ENCODE measurements at regions of chr15 and their contacts with region 1.

Region 1: GRCh38 chr15:83582381-83582780 is 71.5 kb upstream of the ADAMTSL3 start:
- DNase-seq: no peak
- ATAC-seq: no peak
- H3K4me3 ChIP-seq: no peak overlapping the region
- H3K27ac ChIP-seq: no peak overlapping the region
- H3K4me1 ChIP-seq: no peaks in the 10 kb centered on the region
- H3K27me3 ChIP-seq: no peaks in the 10 kb centered on the region
- CTCF ChIP-seq: no peak

Region 2: GRCh38 chr15:83644439-83644838 is 62.1 kb after region 1 on chr15:
- intact Hi-C with region 1: loop called in 1 of 10 experiments (anchors 5 kb)
- DNase-seq: no peak
- ATAC-seq: no peak
- H3K4me3 ChIP-seq: no peak overlapping the region
- H3K27ac ChIP-seq: no peak overlapping the region
- H3K4me1 ChIP-seq: no peaks in the 10 kb centered on the region
- H3K27me3 ChIP-seq: no peaks in the 10 kb centered on the region
- CTCF ChIP-seq: no peak

Measured in heart right ventricle (tissue), 16 donors.